Endothelial cell of umbilical vein (primary cell): ENCODE measurements at regions of chr1 and their contacts with region 1.

Region 1: DNA sequence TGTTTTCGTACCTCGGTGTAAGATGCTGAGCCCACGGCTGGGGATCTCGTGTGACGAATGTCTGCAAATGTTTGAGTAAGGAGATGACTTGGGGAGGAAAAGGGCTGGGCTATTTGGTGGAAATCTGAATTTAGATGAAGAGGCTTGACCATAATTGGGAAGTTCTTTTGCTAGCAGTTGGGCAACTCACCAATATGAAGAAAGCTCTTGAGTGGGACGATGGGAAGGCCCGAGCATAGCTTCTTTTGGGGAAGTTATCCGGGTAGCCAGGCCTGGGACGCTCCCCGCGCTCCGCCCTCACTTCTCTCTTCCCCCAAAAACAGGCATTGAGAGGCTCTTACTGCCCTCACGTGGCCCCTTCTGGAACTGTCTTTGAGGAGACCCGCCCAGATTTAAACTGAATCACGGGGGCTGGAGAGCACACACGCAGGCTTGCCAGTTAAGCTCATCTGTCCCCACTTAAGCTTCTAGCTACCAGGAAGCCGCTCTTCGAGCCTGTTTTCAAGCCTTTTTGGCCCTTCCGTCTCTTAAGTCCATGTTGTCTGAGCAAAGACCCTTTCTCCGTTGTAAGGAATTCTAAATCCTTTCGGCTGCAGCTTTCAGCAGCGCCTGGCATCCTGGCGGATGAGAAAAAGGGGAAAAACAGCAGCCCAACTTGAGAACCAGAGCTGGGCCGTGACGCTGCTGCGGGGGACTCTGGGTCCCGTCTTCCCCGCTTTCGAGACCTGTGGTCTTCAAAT is 93.1 kb downstream of the NID1 start:
- DNase-seq: peak; percentile 94
- H3K4me3 ChIP-seq: no peak overlapping the region
- H3K27ac ChIP-seq: peak overlapping the region; percentile 64
- H3K4me1 ChIP-seq: peaks cover 22% of the 10 kb centered on the region
- H3K27me3 ChIP-seq: peaks cover 0 to 1% of the 10 kb centered on the region in 2 experiments
- CTCF ChIP-seq: peak; percentile 85 to 89
- POLR2A ChIP-seq: no peak

Region 2: GRCh38 chr1:235513495-235514366 is 458.0 kb before region 1 on chr1:
- CTCF ChIA-PET with region 1: interaction called, 41 read pairs
- POLR2A ChIA-PET with region 1: no interaction called
- dilution Hi-C with region 1: no loop called
- intact Hi-C with region 1: loop called (anchors 1 kb)
- DNase-seq: peak; percentile 72
- H3K4me3 ChIP-seq: no peak overlapping the region
- H3K27ac ChIP-seq: no peak overlapping the region
- H3K4me1 ChIP-seq: no peaks in the 10 kb centered on the region
- H3K27me3 ChIP-seq: no peaks in the 10 kb centered on the region
- CTCF ChIP-seq: peak; percentile 68 to 74
- POLR2A ChIP-seq: no peak

Region 3: DNA sequence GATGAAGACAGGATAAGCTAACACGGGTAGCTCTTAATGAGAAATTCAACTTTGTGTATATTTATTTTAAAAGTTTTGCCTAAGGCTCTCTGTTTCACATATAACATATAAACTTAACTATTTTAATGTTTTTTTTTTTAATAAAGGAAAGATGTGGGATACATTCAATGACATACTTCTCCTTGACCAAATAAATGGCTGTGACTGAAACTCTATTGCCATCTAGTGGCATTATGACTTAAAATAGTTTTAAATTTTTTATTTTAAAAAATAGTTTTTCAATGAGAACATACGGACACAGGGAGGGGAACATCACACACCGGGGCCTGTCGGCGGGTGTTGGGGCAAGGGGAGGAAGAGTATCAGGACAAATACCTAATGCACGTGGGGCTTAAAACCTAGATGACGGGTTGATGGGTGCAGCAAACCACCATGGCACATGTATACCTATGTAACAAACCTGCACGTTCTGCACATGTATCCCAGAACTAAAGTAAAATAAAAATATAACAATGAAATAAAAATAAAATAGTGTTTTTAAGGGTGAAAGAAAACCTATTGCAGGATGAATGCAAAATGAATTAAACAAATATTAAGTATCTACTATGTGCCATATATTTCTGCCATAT is 188.5 kb before region 1 on chr1:
- CTCF ChIA-PET with region 1: interaction called, 81 read pairs
- POLR2A ChIA-PET with region 1: no interaction called
- dilution Hi-C with region 1: no loop called
- intact Hi-C with region 1: loop called (anchors 1 kb)
- DNase-seq: peak; percentile 52
- H3K4me3 ChIP-seq: no peak overlapping the region
- H3K27ac ChIP-seq: no peak overlapping the region
- H3K4me1 ChIP-seq: no peaks in the 10 kb centered on the region
- H3K27me3 ChIP-seq: no peaks in the 10 kb centered on the region
- CTCF ChIP-seq: peak in 1 of 2 donors; percentile 13
- POLR2A ChIP-seq: no peak

Region 4: DNA sequence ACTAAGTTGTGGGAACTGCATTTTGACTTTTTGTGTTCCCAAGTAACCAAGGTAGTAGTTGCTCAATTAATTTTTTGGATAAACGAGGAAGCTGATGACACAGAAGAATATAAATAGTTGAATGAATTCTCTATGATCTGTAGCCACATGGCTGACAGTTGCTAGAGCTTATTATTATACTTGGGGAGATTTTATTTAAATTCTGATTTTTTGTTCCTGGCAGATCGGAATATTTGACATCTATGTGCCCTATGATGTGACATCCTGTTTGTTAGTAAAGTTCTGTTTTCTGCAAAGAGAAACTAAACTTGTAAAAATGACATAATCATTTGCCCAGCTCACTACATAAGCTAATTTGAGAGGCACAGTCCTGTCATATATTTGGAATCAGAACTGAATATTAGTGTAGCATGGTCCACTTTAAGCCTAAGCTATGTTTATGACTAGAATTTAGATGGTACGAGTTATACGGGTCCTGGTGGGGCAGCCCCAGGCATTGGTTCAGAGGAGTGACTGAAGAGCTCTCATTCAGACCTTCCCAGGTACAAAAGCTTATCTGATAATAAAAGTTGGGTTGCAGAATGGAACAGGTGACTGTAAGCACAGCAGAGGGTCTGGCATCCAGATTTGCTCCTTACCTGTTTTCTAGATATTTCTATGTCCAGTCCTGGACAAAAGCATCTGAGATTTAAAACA is 95.2 kb before region 1 on chr1:
- CTCF ChIA-PET with region 1: interaction called, 17 read pairs
- POLR2A ChIA-PET with region 1: no interaction called
- dilution Hi-C with region 1: no loop called
- intact Hi-C with region 1: no loop called
- DNase-seq: no peak
- H3K4me3 ChIP-seq: no peak overlapping the region
- H3K27ac ChIP-seq: no peak overlapping the region
- H3K4me1 ChIP-seq: peaks cover 3% of the 10 kb centered on the region
- H3K27me3 ChIP-seq: peaks cover 7 to 12% of the 10 kb centered on the region in 2 experiments
- CTCF ChIP-seq: no peak
- POLR2A ChIP-seq: no peak

Region 5: GRCh38 chr1:235917267-235917811 is 54.4 kb before region 1 on chr1:
- CTCF ChIA-PET with region 1: interaction called, 33 read pairs
- POLR2A ChIA-PET with region 1: no interaction called
- dilution Hi-C with region 1: no loop called
- intact Hi-C with region 1: loop called (anchors 1 kb)
- DNase-seq: peak; percentile 98
- H3K4me3 ChIP-seq: no peak overlapping the region
- H3K27ac ChIP-seq: peak overlapping the region; percentile 93
- H3K4me1 ChIP-seq: peaks cover 33% of the 10 kb centered on the region
- H3K27me3 ChIP-seq: no peaks in the 10 kb centered on the region
- CTCF ChIP-seq: no peak
- POLR2A ChIP-seq: peak; percentile 31

Region 6: DNA sequence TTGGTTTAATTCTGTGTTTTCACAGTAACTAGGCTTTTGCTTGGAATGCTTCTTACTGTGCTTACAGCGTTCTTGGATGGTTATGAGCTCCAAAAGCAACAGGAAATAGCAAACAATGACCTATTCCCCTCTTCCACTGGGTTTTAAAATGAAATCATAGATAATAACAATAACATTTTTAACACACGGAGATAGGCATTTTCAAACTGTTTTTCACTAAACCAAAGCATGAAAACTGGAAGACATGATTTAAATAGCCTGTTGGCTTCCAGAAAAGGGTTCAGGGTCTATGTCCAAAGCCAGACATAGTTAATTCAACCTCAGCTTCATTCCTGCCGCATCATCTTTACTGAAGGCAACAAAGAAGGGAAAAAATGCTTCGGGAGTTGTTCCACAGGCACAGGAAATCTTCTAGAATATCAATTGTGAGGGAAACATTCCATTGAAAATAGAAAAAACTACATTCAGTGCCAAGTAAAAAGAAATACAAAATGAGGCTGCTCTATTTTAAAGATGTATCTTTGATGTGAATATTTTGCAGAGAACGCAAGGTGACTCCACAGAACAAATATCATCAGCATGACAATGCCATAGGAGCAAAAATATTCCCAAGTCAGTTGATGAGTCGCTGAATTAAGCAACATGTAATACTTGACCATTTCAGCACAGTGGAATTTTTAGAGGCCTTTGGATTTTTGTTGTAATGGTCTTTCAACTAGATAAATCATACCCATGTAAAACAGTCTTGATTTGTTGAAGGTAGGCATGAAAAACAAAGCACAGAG is 12.5 kb after region 1 on chr1:
- CTCF ChIA-PET with region 1: interaction called, 50 read pairs
- POLR2A ChIA-PET with region 1: interaction called, 3 read pairs
- dilution Hi-C with region 1: no loop called
- intact Hi-C with region 1: loop called (anchors 1 kb)
- DNase-seq: peak; percentile 92
- H3K4me3 ChIP-seq: peak overlapping the region in 1 of 3 experiments; percentile 29
- H3K27ac ChIP-seq: peak overlapping the region; percentile 96
- H3K4me1 ChIP-seq: peaks cover 47% of the 10 kb centered on the region
- H3K27me3 ChIP-seq: no peaks in the 10 kb centered on the region
- CTCF ChIP-seq: no peak
- POLR2A ChIP-seq: no peak